K562 (cell line): ENCODE measurements at regions of chr11 and their contacts with region 1.

Region 1: GRCh38 chr11:28107748-28108618 is at the starts of genes KIF18A and METTL15:
- DNase-seq: peak; percentile 90 to 99 (median 90)
- ATAC-seq: peak; percentile 84
- H3K4me3 ChIP-seq: peak within 1 kb of the TSS; percentile 78
- H3K27ac ChIP-seq: peak within 1 kb of the TSS; percentile 97
- H3K4me1 ChIP-seq: no peaks in the 10 kb centered on the region; a peak in 4 of 5 replicates
- H3K27me3 ChIP-seq: no peaks in the 10 kb centered on the region
- CTCF ChIP-seq: no peak
- EP300 ChIP-seq: peak; percentile 32; the same call in 1 of the 2 replicates
- POLR2A ChIP-seq: peak; percentile 92
- RAD21 ChIP-seq: no peak
- polyA plus RNA-seq, gene KIF18A: 20.8 to 24.3 TPM
- polyA plus RNA-seq, gene METTL15: 19.1 to 20.9 TPM

Region 2: GRCh38 chr11:28140689-28141455 is 32.9 kb after region 1 on chr11:
- CTCF ChIA-PET with region 1: no interaction called
- POLR2A ChIA-PET with region 1: interaction called, 3 read pairs
- in situ Hi-C with region 1: no loop called
- intact Hi-C with region 1: loop called (anchors 2 kb)
- DNase-seq: no peak
- ATAC-seq: no peak
- H3K4me3 ChIP-seq: no peak overlapping the region
- H3K27ac ChIP-seq: no peak overlapping the region
- H3K4me1 ChIP-seq: no peaks in the 10 kb centered on the region
- H3K27me3 ChIP-seq: no peaks in the 10 kb centered on the region
- CTCF ChIP-seq: no peak
- EP300 ChIP-seq: no peak
- POLR2A ChIP-seq: no peak
- RAD21 ChIP-seq: no peak